Naive thymus-derived CD4-positive, alpha-beta T cell (primary cell): ENCODE measurements at regions of chr9 and their contacts with region 1.

Region 1: DNA sequence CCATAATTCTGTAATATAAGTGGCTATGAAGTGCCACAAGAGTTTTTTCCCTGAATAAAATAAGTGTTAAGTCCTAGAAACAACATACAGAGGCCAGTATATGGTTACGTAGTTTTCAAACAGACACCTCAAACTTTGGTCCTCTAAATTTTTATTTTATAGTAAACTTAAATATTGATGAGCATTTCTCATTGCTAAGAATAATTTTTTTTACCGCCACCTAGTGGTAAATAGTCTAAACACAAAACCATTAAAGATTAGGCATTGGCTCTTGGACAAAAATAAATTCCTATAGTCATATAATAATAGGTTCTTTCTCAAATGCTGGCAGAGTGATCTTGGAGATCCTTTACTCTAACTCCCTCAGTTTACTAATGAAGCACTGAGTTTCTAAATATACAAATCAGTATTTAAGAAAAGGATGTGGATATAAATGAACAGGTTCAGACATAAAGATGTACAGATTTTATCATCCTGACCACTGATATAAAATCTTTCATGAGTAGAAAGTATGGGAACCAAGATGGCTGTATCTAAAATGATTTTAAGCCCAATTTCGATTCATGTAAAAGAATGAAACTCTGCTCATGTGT is 136.2 kb downstream of the FANCC start:
- DNase-seq: peak in 4 of 9 donors; percentile 3 to 15 (median 10)
- ATAC-seq: no peak
- H3K4me3 ChIP-seq: no peak overlapping the region
- H3K4me3 Mint-ChIP-seq: no peak overlapping the region
- H3K27ac ChIP-seq: no peak overlapping the region
- H3K27ac Mint-ChIP-seq: no peak overlapping the region
- H3K4me1 ChIP-seq: no peaks in the 10 kb centered on the region
- H3K4me1 Mint-ChIP-seq: peaks cover 0 to 11% (median 0%) of the 10 kb centered on the region in 7 donors
- H3K27me3 ChIP-seq: no peaks in the 10 kb centered on the region
- H3K27me3 Mint-ChIP-seq: no peaks in the 10 kb centered on the region

Region 2: GRCh38 chr9:95167998-95168397 is 13.3 kb before region 1 on chr9:
- CTCF ChIA-PET with region 1: interaction called, 11 read pairs
- POLR2A ChIA-PET with region 1: no interaction called
- intact Hi-C with region 1: no loop called
- DNase-seq: peak in 7 of 9 donors; percentile 13 to 53 (median 27)
- ATAC-seq: peak; percentile 45
- H3K4me3 ChIP-seq: no peak overlapping the region
- H3K4me3 Mint-ChIP-seq: no peak overlapping the region
- H3K27ac ChIP-seq: no peak overlapping the region
- H3K27ac Mint-ChIP-seq: peak overlapping the region in 1 of 9 donors; percentile 54
- H3K4me1 ChIP-seq: no peaks in the 10 kb centered on the region
- H3K4me1 Mint-ChIP-seq: peaks cover 0 to 30% (median 0%) of the 10 kb centered on the region in 7 donors
- H3K27me3 ChIP-seq: no peaks in the 10 kb centered on the region
- H3K27me3 Mint-ChIP-seq: no peaks in the 10 kb centered on the region